ENCODE measurements at regions of chr17 and their contacts with region 1.

Region 1: GRCh38 chr17:82518826-82519810 is at the start of gene FOXK2:
- DNase-seq: peak; percentile 89
- ATAC-seq: peak; percentile 90
- H3K4me3 ChIP-seq: peak within 1 kb of the TSS; percentile 78 to 98 (median 87)
- H3K27ac ChIP-seq: peak within 1 kb of the TSS; percentile 89
- H3K4me1 ChIP-seq: peaks cover 50% of the 10 kb centered on the region
- H3K27me3 ChIP-seq: no peaks in the 10 kb centered on the region; a peak in 1 of 5 replicates
- CTCF ChIP-seq: no peak
- EP300 ChIP-seq: peak; percentile 48 to 66; a peak in 3 of 4 replicates
- POLR2A ChIP-seq: peak; percentile 66 to 81
- RAD21 ChIP-seq: peak; percentile 86
- total RNA-seq, gene FOXK2: 47.7 and 67.2 TPM in 2 replicates

Region 2: DNA sequence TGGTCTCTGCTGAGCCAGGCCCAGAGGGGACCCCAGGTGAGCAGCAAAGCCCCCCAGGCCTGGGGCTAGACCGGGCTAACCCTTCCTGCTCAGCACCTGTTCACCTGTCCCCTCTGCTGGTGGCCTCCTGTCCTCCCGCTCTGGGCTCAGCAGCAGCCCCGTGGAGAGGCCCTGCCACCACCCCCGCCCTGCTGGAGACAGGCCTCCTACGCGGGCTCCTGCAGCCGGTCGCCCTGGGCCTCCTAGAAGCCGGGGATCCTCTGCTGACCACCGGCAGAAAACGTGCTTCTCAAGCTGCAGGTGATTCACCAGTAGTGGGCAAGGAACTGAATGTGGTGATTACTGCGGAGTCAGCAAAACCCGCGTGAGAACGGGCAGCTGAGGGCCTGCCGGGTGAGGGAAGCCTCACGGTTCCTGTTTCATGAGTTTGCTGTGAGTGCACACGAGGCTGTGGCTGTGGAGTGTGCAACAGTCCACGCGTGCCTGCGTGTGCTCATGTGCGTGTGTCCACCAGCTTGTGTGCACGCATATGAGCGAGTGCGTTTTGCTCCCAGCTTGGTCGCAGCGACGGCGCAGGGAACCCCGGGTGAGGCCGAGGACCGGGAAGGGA is 186.3 kb before region 1 on chr17:
- CTCF ChIA-PET with region 1: no interaction called
- POLR2A ChIA-PET with region 1: no interaction called
- in situ Hi-C with region 1: no loop called
- intact Hi-C with region 1: loop called (anchors 10 kb)
- DNase-seq: no peak
- ATAC-seq: peak; percentile 15
- H3K4me3 ChIP-seq: peak overlapping the region in 2 of 3 experiments; percentile 31 to 35; a peak in 4 of 6 replicates
- H3K27ac ChIP-seq: peak overlapping the region; percentile 9
- H3K4me1 ChIP-seq: peaks cover 90% of the 10 kb centered on the region
- H3K27me3 ChIP-seq: no peaks in the 10 kb centered on the region
- CTCF ChIP-seq: peak; percentile 43
- EP300 ChIP-seq: no peak
- POLR2A ChIP-seq: no peak
- RAD21 ChIP-seq: peak; percentile 42; the same call in 1 of the 2 replicates

Region 3: GRCh38 chr17:82399041-82399441 is 120.1 kb before region 1 on chr17:
- CTCF ChIA-PET with region 1: no interaction called
- POLR2A ChIA-PET with region 1: no interaction called
- in situ Hi-C with region 1: no loop called
- intact Hi-C with region 1: no loop called
- DNase-seq: no peak
- ATAC-seq: no peak
- H3K4me3 ChIP-seq: no peak overlapping the region
- H3K27ac ChIP-seq: no peak overlapping the region
- H3K4me1 ChIP-seq: peaks cover 13% of the 10 kb centered on the region
- H3K27me3 ChIP-seq: no peaks in the 10 kb centered on the region
- CTCF ChIP-seq: no peak
- EP300 ChIP-seq: no peak
- POLR2A ChIP-seq: no peak
- RAD21 ChIP-seq: no peak

Region 4: DNA sequence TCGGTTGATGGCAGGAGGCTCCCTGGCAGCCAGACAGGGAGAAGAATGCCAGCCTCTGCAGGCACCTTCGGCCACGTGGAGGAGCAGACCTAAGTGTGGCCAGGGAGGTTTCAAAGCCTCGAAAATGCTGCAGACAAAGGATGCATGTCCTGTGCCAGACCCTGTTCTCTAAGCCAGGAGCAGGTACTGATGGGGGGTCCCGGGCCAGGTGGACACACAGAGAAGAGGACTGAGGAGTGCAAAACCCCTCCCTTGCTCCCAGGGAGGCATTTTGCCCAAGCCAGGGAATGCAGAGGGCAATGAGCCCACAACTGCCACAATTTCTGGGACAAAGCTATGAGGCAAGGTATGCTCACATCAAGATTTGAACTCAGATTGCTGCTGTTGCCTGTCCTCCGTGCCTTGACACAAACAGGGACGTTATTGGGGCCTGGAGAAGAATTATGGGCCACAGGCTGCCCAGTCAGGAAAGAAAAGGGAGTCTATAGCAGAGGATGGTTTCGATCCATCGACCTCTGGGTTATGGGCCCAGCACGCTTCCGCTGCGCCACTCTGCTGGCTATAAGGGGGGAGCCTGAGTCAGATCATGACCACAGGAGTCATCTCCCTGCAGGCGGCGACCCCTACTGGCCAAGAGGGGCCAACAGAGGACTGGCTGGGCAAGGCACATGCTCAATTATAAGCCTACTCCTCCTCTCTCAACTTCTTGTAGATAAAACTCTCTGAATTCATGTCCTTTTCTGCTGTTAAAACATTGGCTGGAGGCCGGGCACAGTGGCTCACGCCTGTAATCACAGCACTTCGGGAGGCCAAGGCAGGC is 24.7 kb before region 1 on chr17:
- CTCF ChIA-PET with region 1: no interaction called
- POLR2A ChIA-PET with region 1: interaction called, 14 read pairs
- in situ Hi-C with region 1: no loop called
- intact Hi-C with region 1: loop called (anchors 1 kb)
- DNase-seq: peak; percentile 97
- ATAC-seq: peak; percentile 89
- H3K4me3 ChIP-seq: peak overlapping the region; percentile 57 to 69 (median 60); a peak in 5 of 6 replicates
- H3K27ac ChIP-seq: peak overlapping the region; percentile 11
- H3K4me1 ChIP-seq: peaks cover 55% of the 10 kb centered on the region
- H3K27me3 ChIP-seq: no peaks in the 10 kb centered on the region; a peak in 1 of 5 replicates
- CTCF ChIP-seq: peak; percentile 99
- EP300 ChIP-seq: no peak
- POLR2A ChIP-seq: no peak
- RAD21 ChIP-seq: peak; percentile 82

Region 5: GRCh38 chr17:82502207-82502606 is 16.9 kb before region 1 on chr17:
- CTCF ChIA-PET with region 1: no interaction called
- POLR2A ChIA-PET with region 1: interaction called, 30 read pairs
- in situ Hi-C with region 1: no loop called
- intact Hi-C with region 1: no loop called
- DNase-seq: no peak
- ATAC-seq: no peak
- H3K4me3 ChIP-seq: peak overlapping the region in 1 of 3 experiments; percentile 30; a peak in 2 of 6 replicates
- H3K27ac ChIP-seq: no peak overlapping the region
- H3K4me1 ChIP-seq: peaks cover 62% of the 10 kb centered on the region
- H3K27me3 ChIP-seq: no peaks in the 10 kb centered on the region; a peak in 1 of 5 replicates
- CTCF ChIP-seq: no peak
- EP300 ChIP-seq: no peak
- POLR2A ChIP-seq: no peak
- RAD21 ChIP-seq: no peak

Region 6: DNA sequence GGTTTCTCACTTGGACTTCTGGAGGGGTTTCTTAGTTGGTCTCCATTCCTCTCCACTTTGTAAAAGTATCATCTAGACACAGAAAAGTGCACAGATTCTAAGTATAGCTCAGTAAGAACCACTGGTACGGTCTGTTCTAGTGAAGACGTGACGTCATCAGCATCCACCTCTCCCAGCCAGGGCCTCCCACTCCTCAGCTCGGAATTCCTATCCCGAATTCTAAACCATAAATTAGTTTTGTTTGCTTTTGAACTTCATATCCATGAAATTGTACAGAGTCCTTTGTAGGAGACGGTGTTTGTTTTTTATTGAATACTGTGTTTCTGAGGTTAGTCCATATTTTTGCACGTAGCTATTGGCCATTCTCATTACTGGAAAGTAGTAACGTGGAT is 25.9 kb after region 1 on chr17:
- CTCF ChIA-PET with region 1: no interaction called
- POLR2A ChIA-PET with region 1: interaction called, 10 read pairs
- in situ Hi-C with region 1: no loop called
- intact Hi-C with region 1: loop called (anchors 5 kb)
- DNase-seq: no peak
- ATAC-seq: no peak
- H3K4me3 ChIP-seq: no peak overlapping the region
- H3K27ac ChIP-seq: no peak overlapping the region
- H3K4me1 ChIP-seq: peaks cover 54% of the 10 kb centered on the region
- H3K27me3 ChIP-seq: no peaks in the 10 kb centered on the region
- CTCF ChIP-seq: no peak
- EP300 ChIP-seq: no peak
- POLR2A ChIP-seq: no peak
- RAD21 ChIP-seq: no peak

Region 7: DNA sequence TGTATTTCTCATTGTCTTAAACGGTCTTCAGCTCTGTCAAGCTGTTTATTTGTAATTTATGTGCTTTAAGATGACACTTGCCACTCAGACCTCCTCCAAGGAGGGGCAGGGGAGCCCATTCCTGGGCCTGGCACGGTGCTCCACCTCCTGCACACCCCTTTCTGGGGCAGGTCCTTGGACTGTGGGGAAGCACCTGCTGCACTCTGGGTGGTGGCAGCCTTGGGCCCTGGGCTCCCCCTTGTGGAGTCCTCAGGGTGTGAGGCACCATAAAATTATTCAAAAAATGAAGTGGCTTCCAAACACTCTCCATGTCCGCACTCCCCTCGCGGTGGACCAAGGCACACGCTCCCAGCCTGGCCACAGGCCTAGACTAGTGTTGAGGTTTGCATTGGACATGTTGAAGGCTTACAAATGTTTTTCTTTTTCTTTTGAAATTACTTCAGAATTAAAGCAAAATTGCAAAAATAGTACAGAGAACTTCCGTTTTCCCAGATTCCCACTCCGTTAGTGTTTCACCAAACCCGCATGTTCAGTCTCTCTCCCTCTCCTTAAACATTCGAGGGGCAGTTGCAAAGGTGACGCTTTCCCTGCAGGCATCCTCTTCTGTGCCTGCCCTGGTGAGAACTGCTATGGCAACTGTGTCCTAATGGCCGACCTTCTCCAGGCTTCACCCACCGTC is 32.8 kb after region 1 on chr17:
- CTCF ChIA-PET with region 1: no interaction called
- POLR2A ChIA-PET with region 1: interaction called, 12 read pairs
- in situ Hi-C with region 1: no loop called
- intact Hi-C with region 1: loop called (anchors 5 kb)
- DNase-seq: peak; percentile 65
- ATAC-seq: peak; percentile 79
- H3K4me3 ChIP-seq: no peak overlapping the region
- H3K27ac ChIP-seq: peak overlapping the region; percentile 12
- H3K4me1 ChIP-seq: peaks cover 76% of the 10 kb centered on the region
- H3K27me3 ChIP-seq: no peaks in the 10 kb centered on the region
- CTCF ChIP-seq: peak; percentile 89
- EP300 ChIP-seq: 0 out of 4 replicates have a peak, but pooled peaks of 1 of the 2 experiments have one; percentile 4
- POLR2A ChIP-seq: no peak
- RAD21 ChIP-seq: peak; percentile 90

Region 8: DNA sequence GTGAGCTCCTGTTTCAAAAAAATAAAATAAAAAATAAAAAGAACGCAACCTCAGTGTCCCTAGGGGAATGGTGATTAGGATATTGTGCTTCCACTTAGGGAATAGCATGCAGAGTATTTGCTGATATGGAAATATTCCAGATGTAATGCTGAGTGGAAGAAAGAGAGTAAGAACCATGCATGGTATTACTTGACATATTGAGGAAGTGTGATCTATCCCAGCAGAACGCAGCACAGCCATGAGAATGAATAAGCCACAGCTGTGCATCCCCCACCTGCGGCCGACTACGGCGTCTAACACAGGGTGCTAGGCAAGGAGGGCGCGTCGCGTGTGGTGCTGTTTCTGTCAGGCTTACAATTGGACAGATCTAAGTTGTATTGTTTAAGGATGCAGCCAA is 49.9 kb after region 1 on chr17:
- CTCF ChIA-PET with region 1: no interaction called
- POLR2A ChIA-PET with region 1: interaction called, 13 read pairs
- in situ Hi-C with region 1: no loop called
- intact Hi-C with region 1: no loop called
- DNase-seq: no peak
- ATAC-seq: no peak
- H3K4me3 ChIP-seq: 0 out of 6 replicates have a peak overlapping the region, but pooled peaks of 1 of the 3 experiments have one; percentile 8
- H3K27ac ChIP-seq: peak overlapping the region; percentile 87
- H3K4me1 ChIP-seq: peaks cover 65% of the 10 kb centered on the region
- H3K27me3 ChIP-seq: no peaks in the 10 kb centered on the region
- CTCF ChIP-seq: no peak
- EP300 ChIP-seq: no peak
- POLR2A ChIP-seq: no peak
- RAD21 ChIP-seq: no peak

Region 9: DNA sequence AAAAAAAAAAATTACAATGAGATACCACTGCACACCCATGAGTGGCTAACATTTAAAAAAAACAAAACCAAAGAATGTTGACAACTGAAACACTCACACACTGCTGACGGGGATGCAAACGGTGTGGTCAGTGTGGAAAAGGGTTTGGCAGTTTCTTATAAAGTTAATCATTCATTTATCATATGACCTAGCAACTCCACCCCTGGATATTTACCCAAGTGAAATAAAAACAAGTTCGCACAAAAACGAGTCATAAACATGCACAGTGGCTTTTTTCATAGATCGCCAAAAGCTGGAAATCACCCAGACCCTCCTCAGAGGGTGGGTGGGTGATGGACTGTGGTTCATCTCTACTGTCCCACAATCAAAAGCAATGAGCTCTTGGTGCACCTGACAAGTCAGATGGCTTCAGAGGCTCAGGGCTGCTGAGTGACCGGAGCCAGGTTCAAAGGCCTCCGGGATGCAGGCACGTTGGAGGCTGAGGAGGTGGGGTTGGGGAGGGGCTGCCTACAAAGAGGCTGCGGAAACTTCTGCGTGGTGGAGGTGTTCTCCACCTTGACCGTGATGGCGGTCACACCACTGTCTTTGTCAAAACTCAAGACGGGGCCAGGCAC is 165.2 kb after region 1 on chr17:
- CTCF ChIA-PET with region 1: no interaction called
- POLR2A ChIA-PET with region 1: no interaction called
- in situ Hi-C with region 1: no loop called
- intact Hi-C with region 1: no loop called
- DNase-seq: no peak
- ATAC-seq: no peak
- H3K4me3 ChIP-seq: no peak overlapping the region
- H3K27ac ChIP-seq: no peak overlapping the region
- H3K4me1 ChIP-seq: peaks cover 41% of the 10 kb centered on the region
- H3K27me3 ChIP-seq: no peaks in the 10 kb centered on the region
- CTCF ChIP-seq: no peak
- EP300 ChIP-seq: no peak
- POLR2A ChIP-seq: no peak
- RAD21 ChIP-seq: no peak